Right ventricle myocardium superior (tissue), 1 donor: ENCODE measurements at regions of chr19 and their contacts with region 1.

Region 1: DNA sequence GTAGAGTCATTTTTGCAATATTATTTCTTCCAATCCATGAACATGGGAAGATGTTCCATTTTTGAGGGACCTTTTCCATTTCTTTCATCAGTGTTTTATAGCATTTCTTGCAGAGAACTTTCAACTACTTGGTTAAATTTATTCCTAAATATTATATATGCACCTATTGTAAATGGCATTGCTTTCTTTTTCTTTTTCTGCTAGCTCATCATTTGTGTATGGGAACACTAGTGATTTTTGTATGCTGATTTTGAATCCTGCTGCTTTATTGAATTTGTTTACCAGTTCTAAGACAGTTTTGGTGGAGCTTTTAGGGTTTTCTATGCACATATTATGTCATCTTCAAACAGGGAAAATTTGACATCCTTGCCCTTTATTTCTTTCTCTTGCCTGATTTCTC is 7.2 kb upstream of the CYP4F2 start:
- DNase-seq: no peak
- ATAC-seq: no peak

Region 2: DNA sequence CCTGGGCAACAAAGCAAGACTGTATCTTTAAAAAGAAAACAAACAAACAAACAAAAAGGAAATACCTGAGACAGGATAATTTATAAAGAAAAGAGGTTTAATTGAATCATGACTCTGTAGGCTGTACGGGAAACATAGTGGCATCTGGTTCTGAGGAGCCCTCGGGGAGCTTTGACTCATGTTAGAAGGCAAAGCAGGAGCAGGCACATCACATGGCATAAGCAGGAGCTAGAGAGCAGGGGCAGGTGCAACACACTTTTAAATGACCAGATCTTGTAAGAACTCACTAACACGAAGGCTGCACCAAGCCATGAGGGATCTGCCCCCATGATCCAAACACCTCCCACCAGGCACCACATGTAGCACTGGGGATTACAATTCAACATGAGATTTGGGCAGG is 190.4 kb before region 1 on chr19:
- intact Hi-C with region 1: loop called (anchors 5 kb)
- DNase-seq: no peak
- ATAC-seq: no peak